Activated CD4-positive, alpha-beta T cell treated with anti-CD3 and anti-CD28 coated beads, Interleukin-2, amount 10 ng/mL, durations not matched to agents 24 days and 14 days (primary cell): ENCODE measurements at regions of chr5 and their contacts with region 1.

Region 1: DNA sequence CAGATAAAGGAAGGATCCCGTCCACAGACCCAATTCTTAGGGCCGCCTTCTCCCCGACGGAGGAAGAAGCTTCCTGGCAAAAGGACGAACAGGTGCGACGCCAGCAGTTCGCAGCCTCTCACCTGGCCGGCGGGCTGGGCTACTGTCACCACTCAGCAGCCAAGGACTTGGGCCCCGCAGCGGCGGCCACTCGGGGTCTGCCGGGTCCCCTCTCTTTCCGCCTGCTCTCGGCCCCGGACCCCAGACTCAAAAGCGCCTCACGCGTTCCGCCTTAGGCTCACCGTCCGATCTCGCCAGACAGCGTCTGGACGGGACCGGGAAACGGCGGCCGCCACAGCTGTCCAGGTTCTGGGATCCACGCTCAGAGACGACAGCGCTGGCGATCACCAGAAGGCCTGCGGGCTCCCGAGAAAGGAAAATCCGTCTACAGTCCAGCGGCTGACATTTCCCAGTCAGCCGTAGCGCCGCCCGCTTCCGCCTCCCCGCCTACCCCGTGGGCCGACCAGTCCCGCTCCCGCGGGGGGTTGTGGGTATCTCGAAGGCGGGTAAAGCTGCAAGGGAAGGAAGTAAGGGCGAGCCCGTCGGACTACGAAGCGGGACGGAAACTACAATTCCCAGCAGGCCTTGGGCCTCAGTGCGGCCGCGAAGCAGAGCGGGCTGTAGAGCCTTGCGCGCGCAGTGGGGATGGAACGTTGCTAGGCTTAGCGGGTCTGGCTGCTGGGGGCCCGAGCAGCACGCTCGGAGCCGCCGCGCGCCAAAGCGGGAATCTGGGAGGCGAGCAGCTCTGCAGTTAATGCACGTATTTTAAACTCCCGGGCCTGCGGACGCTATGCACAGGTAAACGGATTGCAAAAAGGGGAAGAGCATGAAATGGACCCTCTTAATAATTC is at the starts of genes LMBRD2 and SKP2:
- DNase-seq: peak; percentile 99
- H3K4me3 Mint-ChIP-seq: peak within 1 kb of the TSS; percentile 85
- H3K27ac Mint-ChIP-seq: peak within 1 kb of the TSS; percentile 90
- H3K4me1 Mint-ChIP-seq: peaks cover 36% of the 10 kb centered on the region
- H3K27me3 Mint-ChIP-seq: no peaks in the 10 kb centered on the region
- total RNA-seq, gene LMBRD2: 9.8 TPM in 2 replicates
- total RNA-seq, gene SKP2: 63.0 and 69.8 TPM in 2 replicates

Region 2: GRCh38 chr5:36241631-36242533 is 90.2 kb after region 1 on chr5 and contains the start of gene NADK2:
- intact Hi-C with region 1: loop called (anchors 1 kb)
- DNase-seq: peak; percentile 98
- H3K4me3 Mint-ChIP-seq: peak within 1 kb of the TSS; percentile 87
- H3K27ac Mint-ChIP-seq: peak within 1 kb of the TSS; percentile 94
- H3K4me1 Mint-ChIP-seq: peaks cover 28% of the 10 kb centered on the region
- H3K27me3 Mint-ChIP-seq: peaks cover 7% of the 10 kb centered on the region
- total RNA-seq, gene NADK2: 23.0 and 25.8 TPM in 2 replicates

Region 3: DNA sequence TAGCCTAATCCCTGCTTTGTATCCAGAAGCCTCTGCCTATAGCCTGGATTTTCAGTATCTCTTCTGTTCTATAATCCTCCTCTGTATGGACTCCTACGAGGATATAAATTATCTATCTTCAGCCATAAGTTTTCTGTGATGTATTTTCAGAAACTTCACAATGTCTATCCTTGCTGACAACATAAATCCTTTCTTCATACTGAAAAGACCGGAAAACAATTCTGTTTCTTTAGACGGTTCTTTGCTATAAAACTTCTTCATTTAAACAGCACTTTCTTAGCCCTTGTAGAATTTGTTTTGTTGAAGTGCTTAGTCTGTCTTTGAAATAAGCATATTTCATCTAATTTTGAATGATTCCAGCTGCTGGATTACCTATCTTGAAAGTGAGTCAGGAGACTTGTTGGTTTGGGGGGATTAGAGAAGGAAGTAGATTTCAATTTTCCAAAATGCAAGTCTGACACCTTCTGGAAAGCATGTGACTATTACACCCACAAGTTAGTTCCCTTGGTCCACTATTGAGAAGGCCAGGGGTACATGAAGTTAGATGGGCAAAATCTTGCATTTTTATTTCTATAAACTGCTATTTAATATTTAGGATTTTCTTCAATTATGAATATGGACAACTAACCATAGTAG is 246.3 kb after region 1 on chr5:
- intact Hi-C with region 1: no loop called
- DNase-seq: no peak
- H3K4me3 Mint-ChIP-seq: no peak overlapping the region
- H3K27ac Mint-ChIP-seq: no peak overlapping the region
- H3K4me1 Mint-ChIP-seq: no peaks in the 10 kb centered on the region
- H3K27me3 Mint-ChIP-seq: peaks cover 7% of the 10 kb centered on the region

Region 4: GRCh38 chr5:37370864-37371726 is 1219.4 kb after region 1 on chr5 and contains the start of gene NUP155:
- intact Hi-C with region 1: loop called (anchors 1 kb)
- DNase-seq: peak; percentile 97
- H3K4me3 Mint-ChIP-seq: peak within 1 kb of the TSS; percentile 91
- H3K27ac Mint-ChIP-seq: peak within 1 kb of the TSS; percentile 95
- H3K4me1 Mint-ChIP-seq: peaks cover 23% of the 10 kb centered on the region
- H3K27me3 Mint-ChIP-seq: no peaks in the 10 kb centered on the region
- total RNA-seq, gene NUP155: 85.1 and 86.2 TPM in 2 replicates